ENCODE measurements at regions of chr15 and their contacts with region 1.

Region 1: GRCh38 chr15:39580117-39580484 is 778 bp upstream of the THBS1 start:
- DNase-seq: peak; percentile 94
- ATAC-seq: peak; percentile 89 to 91

Region 2: DNA sequence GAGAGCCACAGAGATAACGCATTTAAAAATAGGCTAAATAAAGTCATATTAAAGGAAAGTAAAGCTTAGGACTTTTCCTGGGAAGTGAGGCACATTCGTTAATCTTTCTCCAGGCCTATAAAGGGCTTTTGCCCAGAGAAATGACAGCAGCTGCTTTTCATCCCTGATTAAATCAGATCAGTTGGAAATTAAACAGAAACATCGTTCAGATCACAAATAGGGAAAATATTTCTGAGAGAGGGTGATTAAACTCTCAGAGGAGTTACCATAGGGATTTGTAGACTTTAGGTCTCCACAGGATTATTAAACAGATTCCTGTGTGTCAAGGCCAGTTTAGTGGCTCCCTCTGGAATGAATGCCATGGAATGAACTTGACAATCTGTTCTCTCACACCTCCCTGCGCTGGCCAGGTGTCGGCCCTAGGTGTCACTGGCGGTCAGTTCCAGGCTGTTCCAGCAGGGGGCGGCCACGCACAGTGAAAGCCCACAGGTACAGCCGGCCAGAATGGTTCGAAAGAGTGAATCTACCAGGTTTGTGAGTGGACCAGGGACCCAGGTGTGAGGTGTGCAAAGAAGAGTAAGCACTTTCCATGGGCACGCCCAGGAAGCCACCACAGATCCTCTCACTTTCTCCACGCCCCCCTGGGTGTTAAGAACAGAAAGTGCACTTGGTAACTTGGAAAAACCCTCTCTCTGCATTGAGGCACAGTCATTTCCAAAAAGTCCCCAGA is 762.5 kb before region 1 on chr15:
- intact Hi-C with region 1: loop called in 1 of 2 experiments (anchors 5 kb)
- DNase-seq: peak; percentile 81
- ATAC-seq: peak; percentile 89 to 93

Region 3: DNA sequence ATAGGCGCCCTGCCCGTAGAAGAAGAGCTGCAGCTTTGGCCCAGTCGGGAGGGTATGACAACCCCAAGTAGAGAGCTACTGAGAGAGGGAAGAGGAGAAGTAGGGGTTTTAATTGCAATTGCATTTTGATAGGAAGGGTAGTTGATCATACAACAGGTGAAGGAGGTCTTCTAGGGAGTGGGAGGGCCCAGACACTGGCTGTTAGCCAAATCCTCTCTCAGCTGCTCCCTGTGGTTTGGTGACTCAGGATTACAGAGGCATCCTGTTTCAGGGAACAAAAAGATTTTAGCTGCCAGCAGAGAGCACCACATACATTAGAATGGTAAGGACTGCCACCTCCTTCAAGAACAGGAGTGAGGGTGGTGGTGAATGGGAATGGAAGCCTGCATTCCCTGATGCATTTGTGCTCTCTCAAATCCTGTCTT is 408.1 kb before region 1 on chr15:
- intact Hi-C with region 1: loop called (anchors 2 kb)
- DNase-seq: peak; percentile 42
- ATAC-seq: peak; percentile 83 to 96

Region 4: DNA sequence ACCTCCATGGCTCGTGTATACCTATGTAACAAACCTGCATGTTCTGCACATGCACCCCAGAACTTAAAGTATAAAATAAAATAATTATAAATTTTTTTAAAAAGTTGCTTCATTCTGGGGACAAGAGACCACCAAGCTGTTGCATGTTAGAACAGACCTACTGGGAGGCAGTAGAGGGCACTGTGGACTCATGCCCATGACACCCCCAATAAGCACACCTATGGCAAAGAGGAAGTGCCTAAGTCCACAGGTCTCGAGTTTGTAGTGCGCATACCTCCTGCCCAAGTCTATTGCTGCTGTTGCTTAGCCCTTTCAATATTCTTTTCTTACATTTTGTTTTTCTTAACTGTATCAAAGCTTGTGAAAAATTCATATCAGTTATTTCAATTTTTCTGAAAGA is 267.1 kb before region 1 on chr15:
- intact Hi-C with region 1: loop called in 1 of 2 experiments (anchors 10 kb)
- DNase-seq: no peak
- ATAC-seq: no peak

Region 5: DNA sequence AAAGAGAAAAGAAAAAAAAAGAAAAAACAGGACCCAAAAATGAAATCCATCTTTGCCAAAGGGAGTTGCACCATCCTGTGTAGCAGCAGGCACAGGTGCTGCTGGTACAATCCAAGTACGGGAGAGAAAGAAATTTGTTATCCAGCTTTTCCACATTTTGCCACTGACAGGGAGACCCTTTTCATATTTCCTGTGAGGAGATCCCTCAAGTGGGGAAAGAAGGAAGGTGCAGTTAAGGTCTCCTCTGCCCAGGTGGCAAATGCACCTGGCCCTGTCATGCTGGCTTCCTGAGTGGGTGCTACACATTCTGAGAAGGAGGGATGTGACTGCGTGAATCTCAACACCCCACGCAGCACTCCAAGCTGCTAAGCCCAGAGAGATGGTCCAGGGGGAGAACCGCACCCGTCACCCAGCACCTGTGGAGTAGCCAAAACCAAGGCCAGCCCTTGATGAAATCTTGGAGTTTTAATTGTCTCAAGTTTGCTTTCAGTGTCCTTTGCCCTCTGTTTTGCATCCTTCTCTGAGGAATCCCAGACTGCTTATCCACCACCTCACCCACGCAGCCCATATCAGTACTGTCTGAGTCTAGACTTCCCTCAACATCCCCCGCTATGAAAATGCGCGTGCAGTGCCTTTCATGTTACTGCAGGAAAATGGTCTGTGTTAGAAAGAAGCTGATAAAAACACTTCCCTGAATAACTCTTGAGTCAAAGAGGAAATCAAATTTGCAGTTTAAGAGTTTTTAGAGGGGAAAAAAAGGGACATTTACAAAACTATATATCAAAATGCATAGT is 141.1 kb before region 1 on chr15:
- intact Hi-C with region 1: loop called in 1 of 2 experiments (anchors 5 kb)
- DNase-seq: no peak
- ATAC-seq: peak; percentile 28 to 77

Region 6: GRCh38 chr15:39495871-39496840 is 83.9 kb before region 1 on chr15:
- intact Hi-C with region 1: loop called in 1 of 2 experiments (anchors 2 kb)
- DNase-seq: no peak
- ATAC-seq: no peak

Region 7: DNA sequence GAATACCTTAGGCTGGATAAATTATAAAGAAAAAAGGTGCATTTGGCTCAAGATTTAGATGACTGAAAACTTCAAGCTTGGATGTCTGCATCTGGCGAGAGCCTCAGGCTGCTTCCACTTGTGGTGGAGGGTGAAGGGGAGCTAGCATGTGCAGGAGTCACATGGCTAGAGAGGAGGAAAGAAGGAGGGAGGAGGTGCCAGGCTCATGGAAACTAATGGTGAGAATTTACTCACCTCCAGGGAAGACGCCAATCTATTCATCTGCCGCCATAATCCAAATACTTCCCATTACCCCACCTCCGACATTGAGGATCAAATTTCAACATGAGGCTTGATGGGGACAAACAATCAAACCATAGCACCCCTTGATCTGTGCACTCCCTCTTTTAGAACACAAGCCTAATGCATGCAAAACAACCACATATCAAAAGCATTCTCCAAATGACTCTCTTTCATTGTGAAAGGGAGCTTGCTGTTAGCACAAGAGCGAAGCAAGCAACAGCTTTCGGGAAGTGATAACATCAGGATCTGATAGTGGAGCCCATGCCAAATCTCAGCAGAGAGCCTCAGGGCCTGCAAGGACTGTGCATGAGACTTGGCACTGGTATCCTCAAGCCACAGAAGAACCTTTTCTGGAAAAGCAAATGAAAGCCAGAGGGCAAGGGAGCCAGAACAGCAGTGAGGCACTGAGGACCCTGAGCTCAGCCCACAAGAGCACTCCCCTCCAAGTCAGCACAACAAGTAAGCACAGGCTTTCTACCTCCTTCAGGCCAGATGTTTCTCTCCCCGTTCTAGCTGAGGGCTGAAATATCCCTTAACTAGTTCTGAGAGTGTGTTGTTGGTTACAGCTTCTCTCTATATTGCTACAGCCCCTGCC is 49.4 kb before region 1 on chr15:
- intact Hi-C with region 1: no loop called
- DNase-seq: no peak
- ATAC-seq: no peak

Region 8: GRCh38 chr15:39692356-39693327 is 112.5 kb after region 1 on chr15:
- intact Hi-C with region 1: no loop called
- DNase-seq: no peak
- ATAC-seq: no peak

Region 9: DNA sequence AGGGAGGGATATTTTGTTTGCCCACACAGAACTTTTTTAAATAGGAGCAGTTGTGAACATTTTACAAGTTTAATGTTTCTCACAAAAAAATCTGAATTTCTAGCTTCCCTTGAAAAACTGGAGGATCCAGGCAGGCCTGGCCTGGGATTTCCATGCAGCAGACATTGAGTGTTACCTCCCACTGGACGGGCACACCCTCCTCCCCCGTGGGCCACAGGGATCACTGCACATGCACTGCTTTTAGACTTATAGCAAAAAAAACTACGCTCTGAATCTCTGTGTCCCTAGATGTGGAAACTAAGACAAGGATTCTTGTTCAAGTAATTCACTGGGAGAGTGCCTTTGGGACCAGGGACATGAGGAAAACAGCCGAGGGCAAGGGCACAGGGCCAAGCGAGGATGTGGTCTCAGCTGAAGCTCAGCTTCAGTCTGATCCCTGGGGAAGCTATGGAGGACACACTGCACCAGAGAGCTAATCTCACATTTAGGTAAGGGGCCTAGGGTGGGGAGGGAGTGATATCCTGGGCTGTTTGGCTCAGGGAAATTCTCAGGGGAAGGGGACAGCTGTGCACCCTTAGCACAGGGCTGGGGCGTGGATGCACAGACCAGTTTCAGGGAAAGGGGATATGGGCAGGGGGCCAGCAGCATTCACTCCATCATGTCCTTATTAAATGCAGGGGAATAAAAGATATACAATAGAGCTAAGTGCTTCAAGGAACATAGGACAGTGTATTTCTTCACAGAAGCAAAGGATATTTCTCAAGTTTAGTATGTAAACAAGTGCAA is 156.5 kb after region 1 on chr15:
- intact Hi-C with region 1: no loop called
- DNase-seq: peak; percentile 24
- ATAC-seq: peak; percentile 46 to 57

Region 10: GRCh38 chr15:39756806-39757522 is 176.9 kb after region 1 on chr15:
- intact Hi-C with region 1: loop called in 1 of 2 experiments (anchors 5 kb)
- DNase-seq: no peak
- ATAC-seq: no peak

Region 11: DNA sequence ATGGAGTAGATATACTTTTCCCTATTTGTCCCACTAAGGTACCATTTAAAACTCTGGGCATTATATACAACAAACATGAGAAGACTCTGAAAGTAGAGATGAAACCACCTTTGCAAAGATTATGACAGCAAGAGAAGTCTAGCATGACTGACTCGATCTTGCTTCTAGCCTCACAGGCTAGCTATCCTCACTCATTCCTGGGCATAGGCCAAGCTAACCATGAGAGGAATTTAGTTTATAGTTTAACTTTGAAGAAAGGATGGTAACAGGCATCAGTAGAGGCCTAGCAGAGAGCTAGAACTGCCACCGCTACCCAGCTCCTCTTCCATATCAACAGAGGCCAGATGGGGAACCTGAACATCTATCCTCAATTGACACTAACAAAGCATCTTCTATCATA is 266.0 kb after region 1 on chr15:
- intact Hi-C with region 1: no loop called
- DNase-seq: no peak
- ATAC-seq: no peak